ENCODE measurements at regions of chr1 and their contacts with region 1.

Region 1: DNA sequence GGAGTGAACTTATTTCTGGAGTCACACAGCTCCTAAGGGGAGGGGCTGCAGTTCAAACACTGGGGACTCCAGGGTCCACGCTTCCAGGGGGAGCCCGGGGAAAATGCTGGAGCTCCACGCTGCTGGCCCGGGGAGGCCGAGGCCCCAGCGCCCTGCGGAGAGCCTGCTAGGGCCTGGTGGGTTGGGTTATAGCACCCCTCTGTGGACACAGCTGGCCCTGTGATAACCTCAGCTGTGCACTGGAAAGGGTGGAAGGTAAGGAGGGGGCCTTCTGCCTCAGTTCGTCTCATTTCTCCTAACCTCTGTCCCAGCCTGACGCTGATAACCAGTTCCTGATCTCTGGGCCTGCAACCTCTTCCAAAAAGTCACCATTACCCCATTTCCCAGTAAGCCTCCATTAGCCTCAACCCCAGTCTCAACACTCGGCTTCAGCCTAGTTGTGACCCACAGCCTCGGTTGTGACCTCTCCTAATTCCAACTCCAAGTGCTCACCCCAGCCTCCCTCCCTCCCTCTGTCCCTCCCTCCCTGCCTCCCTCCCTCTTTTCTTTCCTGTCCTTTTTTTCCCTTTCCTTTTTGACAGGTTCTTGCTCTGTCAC is 7.1 kb downstream of the NBL1 start:
- DNase-seq: no peak
- ATAC-seq: peak; percentile 65
- H3K4me3 Mint-ChIP-seq: no peak overlapping the region
- H3K27ac Mint-ChIP-seq: no peak overlapping the region
- H3K4me1 Mint-ChIP-seq: peaks cover 4% of the 10 kb centered on the region
- H3K27me3 Mint-ChIP-seq: peaks cover 28% of the 10 kb centered on the region
- CTCF ChIP-seq: no peak

Region 2: GRCh38 chr1:19240673-19241538 is 410.3 kb before region 1 on chr1:
- CTCF ChIA-PET with region 1: no interaction called
- POLR2A ChIA-PET with region 1: no interaction called
- intact Hi-C with region 1: loop called (anchors 5 kb)
- DNase-seq: peak; percentile 52
- ATAC-seq: peak; percentile 99
- H3K4me3 Mint-ChIP-seq: no peak overlapping the region
- H3K27ac Mint-ChIP-seq: no peak overlapping the region
- H3K4me1 Mint-ChIP-seq: no peaks in the 10 kb centered on the region
- H3K27me3 Mint-ChIP-seq: no peaks in the 10 kb centered on the region
- CTCF ChIP-seq: peak; percentile 95

Region 3: DNA sequence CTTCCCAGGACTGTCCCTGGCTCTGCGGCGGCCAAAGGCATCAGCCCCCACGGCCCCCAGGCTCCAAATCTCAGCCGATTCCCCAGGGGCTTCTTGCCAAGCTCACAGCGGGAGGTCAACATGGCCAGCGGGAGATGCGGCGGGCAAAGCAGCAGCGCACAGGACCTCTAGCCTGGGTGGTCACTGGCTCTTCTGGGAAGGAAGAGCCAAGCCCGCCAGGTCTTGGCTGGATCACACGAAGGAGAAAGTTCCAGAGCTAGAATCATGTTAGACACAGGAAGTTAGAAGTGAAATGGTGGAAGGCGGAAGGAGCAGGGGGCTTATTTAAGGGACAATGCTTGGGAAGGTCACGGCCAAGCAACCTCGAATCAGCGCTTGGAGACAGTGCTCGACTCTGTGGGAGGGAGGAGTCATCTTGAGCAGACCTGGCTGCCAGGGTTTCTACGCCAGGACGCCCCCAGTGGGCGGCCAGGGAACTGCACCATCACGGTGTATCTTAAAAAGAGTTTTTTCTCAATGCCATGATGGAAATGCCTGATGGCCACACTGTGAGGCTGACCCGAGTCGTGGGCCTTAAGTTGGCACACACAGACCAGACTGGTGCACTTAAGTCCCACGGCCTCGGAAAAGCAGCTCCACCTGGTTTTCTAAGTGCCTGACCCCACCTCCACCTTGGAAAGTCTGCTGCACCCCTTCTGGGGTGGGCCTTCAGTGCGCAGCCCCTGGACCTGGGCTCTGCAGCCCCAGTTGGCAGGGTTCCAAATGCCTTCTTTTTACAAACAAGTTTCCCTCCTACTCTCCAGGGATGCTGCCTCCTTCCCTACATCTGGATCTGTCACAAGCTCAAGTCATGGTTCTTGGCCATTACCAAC is 309.8 kb before region 1 on chr1:
- CTCF ChIA-PET with region 1: interaction called, 6 read pairs
- POLR2A ChIA-PET with region 1: no interaction called
- intact Hi-C with region 1: loop called (anchors 1 kb)
- DNase-seq: peak; percentile 64
- ATAC-seq: peak; percentile 85
- H3K4me3 Mint-ChIP-seq: no peak overlapping the region
- H3K27ac Mint-ChIP-seq: peak overlapping the region; percentile 35
- H3K4me1 Mint-ChIP-seq: no peaks in the 10 kb centered on the region
- H3K27me3 Mint-ChIP-seq: no peaks in the 10 kb centered on the region
- CTCF ChIP-seq: no peak

Region 4: GRCh38 chr1:19596714-19597495 is 54.3 kb before region 1 on chr1:
- CTCF ChIA-PET with region 1: no interaction called
- POLR2A ChIA-PET with region 1: no interaction called
- intact Hi-C with region 1: no loop called
- DNase-seq: peak; percentile 86
- ATAC-seq: peak; percentile 91
- H3K4me3 Mint-ChIP-seq: peak overlapping the region; percentile 100
- H3K27ac Mint-ChIP-seq: peak overlapping the region; percentile 99
- H3K4me1 Mint-ChIP-seq: peaks cover 48% of the 10 kb centered on the region
- H3K27me3 Mint-ChIP-seq: no peaks in the 10 kb centered on the region
- CTCF ChIP-seq: no peak

Region 5: GRCh38 chr1:19668893-19669292 is 17.7 kb after region 1 on chr1:
- CTCF ChIA-PET with region 1: no interaction called
- POLR2A ChIA-PET with region 1: no interaction called
- intact Hi-C with region 1: no loop called
- DNase-seq: no peak
- ATAC-seq: no peak
- H3K4me3 Mint-ChIP-seq: no peak overlapping the region
- H3K27ac Mint-ChIP-seq: no peak overlapping the region
- H3K4me1 Mint-ChIP-seq: peaks cover 20% of the 10 kb centered on the region
- H3K27me3 Mint-ChIP-seq: peaks cover 50% of the 10 kb centered on the region
- CTCF ChIP-seq: no peak

Measured in activated B cell treated with CpG ODN at 0.5 μM for 24 hours (primary cell).